SK-N-SH (cell line): ENCODE measurements at regions of chr11 and their contacts with region 1.

Region 1: DNA sequence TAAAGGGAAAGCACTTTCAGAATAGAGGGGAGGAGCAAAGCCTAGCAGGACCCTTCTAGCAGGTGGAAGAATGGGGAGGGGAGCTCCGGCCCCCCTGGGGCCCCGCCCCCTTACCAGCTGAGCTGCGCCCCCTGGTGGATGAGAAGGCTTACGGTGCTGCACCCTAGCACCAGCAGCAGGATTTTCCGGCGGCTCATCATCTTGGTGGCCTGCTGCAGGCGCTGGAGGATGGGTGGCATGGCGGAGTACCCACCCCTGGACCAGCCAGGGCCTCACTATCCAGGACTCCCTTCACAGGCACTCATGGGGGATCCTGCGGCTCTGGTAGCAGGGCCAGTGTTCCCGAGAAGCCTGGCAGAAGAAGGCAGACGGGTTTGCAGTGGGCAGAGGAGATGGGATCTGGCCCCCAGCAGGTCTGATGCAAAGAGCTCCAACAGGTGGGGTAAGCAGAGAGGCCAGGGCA is 3.8 kb downstream of the GAL3ST3 start:
- DNase-seq: peak; percentile 97
- H3K4me3 ChIP-seq: peak overlapping the region in 1 of 2 experiments; percentile 53; a peak in 1 of 4 replicates
- H3K27ac ChIP-seq: peak overlapping the region in 1 of 2 experiments; percentile 22; a peak in 1 of 4 replicates
- H3K4me1 ChIP-seq: peaks cover 6 to 32% of the 10 kb centered on the region in 2 experiments; a peak in 1 of 4 replicates
- H3K27me3 ChIP-seq: no peaks in the 10 kb centered on the region
- CTCF ChIP-seq: peak; percentile 86
- EP300 ChIP-seq: no peak
- RAD21 ChIP-seq: peak; percentile 45

Region 2: GRCh38 chr11:65844231-65845190 is 200.7 kb before region 1 on chr11:
- CTCF ChIA-PET with region 1: no interaction called
- POLR2A ChIA-PET with region 1: no interaction called
- DNase-seq: no peak
- H3K4me3 ChIP-seq: no peak overlapping the region
- H3K27ac ChIP-seq: no peak overlapping the region
- H3K4me1 ChIP-seq: no peaks in the 10 kb centered on the region; a peak in 1 of 4 replicates
- H3K27me3 ChIP-seq: no peaks in the 10 kb centered on the region
- CTCF ChIP-seq: no peak
- EP300 ChIP-seq: no peak
- RAD21 ChIP-seq: no peak

Region 3: GRCh38 chr11:66001942-66002647 is 43.1 kb before region 1 on chr11 and contains the starts of genes BANF1 and EIF1AD:
- CTCF ChIA-PET with region 1: interaction called, 6 read pairs
- POLR2A ChIA-PET with region 1: interaction called, 11 read pairs
- DNase-seq: peak; percentile 90
- H3K4me3 ChIP-seq: peak within 1 kb of the TSS; percentile 95 to 99
- H3K27ac ChIP-seq: peak within 1 kb of the TSS; percentile 98
- H3K4me1 ChIP-seq: peaks cover 6 to 11% of the 10 kb centered on the region in 2 experiments; a peak in 3 of 4 replicates
- H3K27me3 ChIP-seq: no peaks in the 10 kb centered on the region
- CTCF ChIP-seq: no peak
- EP300 ChIP-seq: peak; percentile 2 to 42; a peak in 1 of 4 replicates
- RAD21 ChIP-seq: no peak
- polyA plus RNA-seq, gene BANF1: 311 and 382 TPM in 2 replicates
- polyA plus RNA-seq, gene EIF1AD: 28.9 and 31.4 TPM in 2 replicates

Region 4: GRCh38 chr11:66059966-66060680 is 14.9 kb after region 1 on chr11:
- CTCF ChIA-PET with region 1: interaction called, 10 read pairs
- POLR2A ChIA-PET with region 1: interaction called, 3 read pairs
- DNase-seq: no peak
- H3K4me3 ChIP-seq: no peak overlapping the region
- H3K27ac ChIP-seq: no peak overlapping the region
- H3K4me1 ChIP-seq: no peaks in the 10 kb centered on the region
- H3K27me3 ChIP-seq: no peaks in the 10 kb centered on the region
- CTCF ChIP-seq: no peak
- EP300 ChIP-seq: no peak
- RAD21 ChIP-seq: no peak